Body of pancreas (tissue), 4 donors: ENCODE measurements at regions of chr9 and their contacts with region 1.

Region 1: GRCh38 chr9:89340332-89340731 is 22.0 kb downstream of the SECISBP2 start:
- DNase-seq: no peak
- ATAC-seq: no peak
- H3K4me3 ChIP-seq: no peak overlapping the region
- H3K27ac ChIP-seq: no peak overlapping the region
- H3K4me1 ChIP-seq: no peaks in the 10 kb centered on the region
- H3K27me3 ChIP-seq: no peaks in the 10 kb centered on the region
- CTCF ChIP-seq: no peak
- POLR2A ChIP-seq: no peak

Region 2: GRCh38 chr9:89395931-89396710 is 55.8 kb after region 1 on chr9:
- intact Hi-C with region 1: loop called (anchors 10 kb)
- DNase-seq: no peak
- ATAC-seq: no peak
- H3K4me3 ChIP-seq: no peak overlapping the region
- H3K27ac ChIP-seq: no peak overlapping the region
- H3K4me1 ChIP-seq: peaks cover 8% of the 10 kb centered on the region
- H3K27me3 ChIP-seq: no peaks in the 10 kb centered on the region
- CTCF ChIP-seq: no peak
- POLR2A ChIP-seq: no peak

Region 3: GRCh38 chr9:90038763-90039162 is 698.4 kb after region 1 on chr9:
- intact Hi-C with region 1: no loop called
- DNase-seq: peak in 2 of 4 donors; percentile 19 to 25
- ATAC-seq: no peak
- H3K4me3 ChIP-seq: no peak overlapping the region
- H3K27ac ChIP-seq: no peak overlapping the region
- H3K4me1 ChIP-seq: no peaks in the 10 kb centered on the region
- H3K27me3 ChIP-seq: no peaks in the 10 kb centered on the region
- CTCF ChIP-seq: no peak
- POLR2A ChIP-seq: no peak